Posterior vena cava (tissue), 2 donors: ENCODE measurements at regions of chr7 and their contacts with region 1.

Region 1: GRCh38 chr7:48708635-48709034 is 215.7 kb upstream of the CDC14C start:
- DNase-seq: no peak

Region 2: GRCh38 chr7:46993396-46993795 is 1715.2 kb before region 1 on chr7:
- intact Hi-C with region 1: loop called in 1 of 2 experiments (anchors 10 kb)
- DNase-seq: no peak

Region 3: DNA sequence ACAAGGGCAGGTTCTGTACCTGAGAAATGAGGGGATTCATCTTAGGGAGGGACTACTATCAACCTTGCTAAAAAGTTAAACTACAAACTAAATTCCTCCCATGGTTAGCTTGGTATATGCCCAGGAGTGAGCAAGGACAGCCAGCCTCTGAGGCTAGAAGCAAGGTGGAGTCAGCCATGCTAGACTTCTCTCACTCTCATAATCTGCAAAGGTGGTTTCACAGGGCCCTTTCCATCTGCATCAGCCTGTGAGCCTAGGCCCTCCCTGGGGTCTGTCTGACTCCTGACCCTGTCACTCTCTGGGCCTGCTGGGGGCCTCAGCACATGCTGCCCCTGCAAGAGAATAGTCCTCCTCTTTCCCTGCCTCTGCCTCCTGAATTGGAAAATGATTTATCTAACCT is 471.3 kb before region 1 on chr7:
- intact Hi-C with region 1: loop called in 1 of 2 experiments (anchors 5 kb)
- DNase-seq: no peak